ENCODE measurements at regions of chr15 and their contacts with region 1.

Region 1: DNA sequence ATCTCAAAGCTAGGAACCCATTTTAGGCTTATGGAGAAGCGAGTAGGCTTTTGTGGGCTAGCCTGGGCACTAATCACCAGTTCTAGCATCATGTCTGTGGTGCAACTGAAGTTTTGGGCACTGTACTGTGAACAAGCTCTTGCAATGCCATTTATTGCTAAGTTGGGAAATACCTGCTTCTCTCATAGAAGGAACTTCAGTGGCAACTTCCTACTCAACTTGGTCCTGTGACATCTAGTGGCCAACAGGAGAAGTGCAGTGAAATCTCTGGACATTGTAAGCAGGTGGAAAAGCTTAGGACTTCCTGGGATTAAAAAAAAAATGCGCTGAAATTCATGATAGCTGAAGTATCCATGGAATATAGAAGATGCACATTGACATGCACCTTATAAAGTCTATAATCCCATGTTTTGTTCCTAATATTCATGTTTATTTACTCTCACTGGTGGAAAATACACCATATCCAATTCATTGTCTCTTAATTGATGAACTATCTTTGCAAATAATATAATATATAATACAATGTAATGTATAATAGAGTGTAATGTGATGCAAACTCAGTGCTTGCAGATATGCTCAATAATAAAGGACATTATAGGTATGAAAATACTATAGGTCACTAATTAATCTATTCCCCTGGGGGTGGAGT is 6.5 kb upstream of the ALDH1A3 start:
- DNase-seq: peak; percentile 89
- H3K4me3 Mint-ChIP-seq: no peak overlapping the region
- H3K27ac Mint-ChIP-seq: no peak overlapping the region
- H3K4me1 Mint-ChIP-seq: peaks cover 5% of the 10 kb centered on the region
- H3K27me3 Mint-ChIP-seq: no peaks in the 10 kb centered on the region
- CTCF ChIP-seq: peak; percentile 73

Region 2: GRCh38 chr15:100627789-100628395 is 245.3 kb before region 1 on chr15:
- CTCF ChIA-PET with region 1: interaction called, 22 read pairs
- POLR2A ChIA-PET with region 1: interaction called, 3 read pairs
- intact Hi-C with region 1: loop called (anchors 1 kb)
- DNase-seq: peak; percentile 78
- H3K4me3 Mint-ChIP-seq: no peak overlapping the region
- H3K27ac Mint-ChIP-seq: peak overlapping the region; percentile 41
- H3K4me1 Mint-ChIP-seq: peaks cover 6% of the 10 kb centered on the region
- H3K27me3 Mint-ChIP-seq: no peaks in the 10 kb centered on the region
- CTCF ChIP-seq: peak; percentile 84

Region 3: DNA sequence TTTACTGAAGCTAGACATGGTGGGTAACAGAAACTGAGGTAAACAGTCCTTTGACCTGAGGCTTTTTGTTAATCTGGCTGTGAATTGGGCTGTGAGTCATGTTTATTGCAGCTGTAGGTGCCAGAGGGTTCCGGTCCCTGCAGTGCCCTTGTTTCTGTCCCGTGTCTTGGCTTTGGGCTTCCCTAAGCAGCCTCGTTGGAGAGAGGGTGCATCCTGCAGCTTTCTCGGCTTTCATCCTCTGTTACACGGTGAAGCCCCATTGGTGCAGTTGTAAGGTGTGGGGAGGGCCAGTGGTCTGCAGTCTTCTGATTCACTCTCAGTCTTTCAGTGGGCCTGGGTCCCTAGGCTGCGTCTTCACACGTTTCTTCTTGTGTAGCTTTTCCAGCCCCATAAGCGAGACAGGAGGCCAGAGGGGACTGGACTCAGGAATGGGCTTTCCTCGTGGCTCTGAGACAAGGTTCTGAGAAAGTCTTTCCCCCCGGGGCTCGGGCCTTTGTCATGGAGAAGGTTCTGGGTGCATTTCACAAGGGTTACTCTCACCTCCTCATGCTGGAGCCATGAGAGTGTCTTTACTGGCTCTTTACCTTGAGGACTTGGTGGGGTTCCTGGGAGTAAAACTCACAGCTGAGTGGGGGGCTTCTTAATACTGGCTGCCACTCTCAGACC is 237.6 kb before region 1 on chr15:
- CTCF ChIA-PET with region 1: interaction called, 11 read pairs
- POLR2A ChIA-PET with region 1: interaction called, 3 read pairs
- intact Hi-C with region 1: no loop called
- DNase-seq: peak; percentile 67
- H3K4me3 Mint-ChIP-seq: no peak overlapping the region
- H3K27ac Mint-ChIP-seq: peak overlapping the region; percentile 65
- H3K4me1 Mint-ChIP-seq: peaks cover 18% of the 10 kb centered on the region
- H3K27me3 Mint-ChIP-seq: no peaks in the 10 kb centered on the region
- CTCF ChIP-seq: no peak

Region 4: DNA sequence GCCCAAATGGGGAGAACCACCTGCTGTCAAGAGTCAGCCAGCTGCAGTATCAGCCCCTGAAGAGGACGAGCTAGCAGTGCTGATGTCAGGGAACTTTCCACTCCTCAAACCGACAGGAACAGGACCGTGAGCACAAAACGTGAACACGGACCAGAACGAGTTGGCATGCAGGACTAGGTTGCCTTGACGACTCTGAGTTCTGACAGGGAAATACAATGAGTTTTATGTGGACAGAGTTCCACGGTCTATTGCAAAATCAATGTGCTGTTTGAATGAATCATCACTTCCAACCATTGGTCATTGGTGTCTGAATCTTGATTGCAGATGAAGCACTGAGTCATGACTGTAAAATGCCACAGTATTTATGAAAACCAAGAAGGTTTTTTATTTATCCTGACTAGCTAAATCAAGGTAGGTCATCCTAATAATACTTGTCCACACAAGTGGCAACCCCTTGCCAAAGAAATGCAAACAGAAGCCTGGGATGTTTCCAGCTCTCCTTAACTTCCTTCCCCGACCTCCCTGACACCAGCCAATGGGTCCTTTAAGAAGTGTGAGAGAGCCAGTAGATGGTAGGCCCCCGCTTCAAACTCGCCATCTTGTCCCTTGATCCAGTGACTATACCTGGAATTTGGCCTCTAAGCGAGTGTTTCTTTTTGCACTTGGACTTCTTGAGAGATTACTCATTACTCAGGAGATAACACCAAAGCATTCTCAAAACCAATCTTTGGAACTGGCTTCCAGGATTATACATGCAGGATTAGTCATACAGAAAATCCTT is 151.2 kb before region 1 on chr15:
- CTCF ChIA-PET with region 1: interaction called, 9 read pairs
- POLR2A ChIA-PET with region 1: interaction called, 8 read pairs
- intact Hi-C with region 1: loop called (anchors 1 kb)
- DNase-seq: peak; percentile 99
- H3K4me3 Mint-ChIP-seq: peak overlapping the region; percentile 66
- H3K27ac Mint-ChIP-seq: peak overlapping the region; percentile 100
- H3K4me1 Mint-ChIP-seq: peaks cover 38% of the 10 kb centered on the region
- H3K27me3 Mint-ChIP-seq: no peaks in the 10 kb centered on the region
- CTCF ChIP-seq: no peak

Region 5: DNA sequence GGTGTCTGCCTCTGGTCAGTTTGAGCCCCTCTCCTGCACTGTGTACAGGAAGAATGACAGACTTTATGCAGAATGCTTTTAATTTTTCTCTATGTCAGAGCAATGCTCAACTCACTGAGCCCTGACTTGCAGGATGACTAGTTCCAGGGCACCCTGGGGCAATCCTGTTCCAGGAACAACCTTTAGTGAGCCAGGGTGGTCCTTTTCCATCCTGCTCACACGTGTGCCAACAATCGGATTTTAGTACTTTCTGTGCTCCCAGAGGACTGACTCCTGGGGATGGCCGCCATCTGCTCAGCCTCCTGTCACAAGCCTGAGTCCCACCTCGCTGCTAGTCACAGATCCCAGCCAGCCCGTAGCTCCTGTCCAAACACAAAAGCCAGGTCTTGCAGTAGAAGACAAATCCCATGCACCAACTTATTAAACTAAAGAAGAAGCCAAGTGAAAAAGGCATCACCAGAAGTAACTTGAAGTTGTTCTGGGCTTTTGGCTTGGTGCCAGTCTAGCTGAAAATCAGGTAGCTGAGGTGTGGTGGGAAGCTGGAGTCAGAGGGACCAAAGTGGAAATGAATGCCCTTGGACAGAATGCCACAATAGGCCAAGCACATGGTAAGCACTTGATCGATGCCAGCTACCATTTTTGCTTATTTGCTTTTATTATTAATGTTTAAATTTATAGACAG is 41.5 kb before region 1 on chr15:
- CTCF ChIA-PET with region 1: no interaction called
- POLR2A ChIA-PET with region 1: no interaction called
- intact Hi-C with region 1: no loop called
- DNase-seq: no peak
- H3K4me3 Mint-ChIP-seq: no peak overlapping the region
- H3K27ac Mint-ChIP-seq: no peak overlapping the region
- H3K4me1 Mint-ChIP-seq: no peaks in the 10 kb centered on the region
- H3K27me3 Mint-ChIP-seq: no peaks in the 10 kb centered on the region
- CTCF ChIP-seq: no peak

Region 6: DNA sequence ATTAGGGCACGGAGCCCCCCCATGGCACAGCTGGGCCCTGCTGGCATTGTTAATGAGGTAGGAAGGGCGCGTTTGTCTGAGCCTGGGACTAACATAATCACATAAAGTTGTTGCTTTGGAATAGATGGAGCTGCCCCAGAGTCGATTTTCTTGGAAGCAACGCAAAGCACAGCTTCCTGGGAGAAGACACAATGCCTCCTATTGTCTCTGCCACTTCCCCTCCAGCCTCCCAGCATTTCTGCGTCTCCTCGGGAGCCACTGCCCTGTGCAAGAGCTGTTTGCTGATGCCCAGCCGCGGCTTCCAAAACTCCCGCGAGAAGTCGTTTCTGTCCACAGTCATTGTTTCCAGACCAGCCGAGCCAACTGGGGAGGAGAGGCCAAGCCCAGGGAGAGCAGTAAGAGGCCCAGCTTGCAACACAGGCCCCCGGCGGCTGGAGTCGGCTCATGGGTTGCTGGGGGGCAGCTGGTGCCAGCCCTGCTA is 11.6 kb before region 1 on chr15:
- CTCF ChIA-PET with region 1: interaction called, 18 read pairs
- POLR2A ChIA-PET with region 1: interaction called, 3 read pairs
- intact Hi-C with region 1: no loop called
- DNase-seq: no peak
- H3K4me3 Mint-ChIP-seq: no peak overlapping the region
- H3K27ac Mint-ChIP-seq: no peak overlapping the region
- H3K4me1 Mint-ChIP-seq: no peaks in the 10 kb centered on the region
- H3K27me3 Mint-ChIP-seq: no peaks in the 10 kb centered on the region
- CTCF ChIP-seq: no peak